G401 (cell line): ENCODE measurements at regions of chr15 and their contacts with region 1.

Region 1: DNA sequence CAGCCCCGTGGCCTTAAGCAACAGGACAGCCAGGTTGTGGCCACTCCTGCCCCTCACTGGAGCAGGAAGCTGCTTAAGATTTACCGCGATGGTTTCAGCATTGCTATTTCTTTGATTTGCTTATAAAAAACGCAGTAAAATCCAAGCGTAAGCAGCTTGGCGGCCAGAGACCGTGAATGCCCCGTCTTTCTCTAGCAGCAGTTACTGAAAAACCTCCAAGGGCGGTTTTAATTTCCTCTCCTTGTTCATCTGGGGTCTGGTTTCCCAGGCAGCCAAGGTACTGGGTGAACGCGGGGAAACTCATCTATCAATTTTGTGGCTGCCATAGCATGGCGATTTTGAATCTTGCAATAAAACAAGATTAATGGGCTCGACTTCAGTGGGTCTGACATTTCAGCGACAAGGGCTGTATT is 130.3 kb downstream of the MINAR1 start:
- DNase-seq: no peak

Region 2: DNA sequence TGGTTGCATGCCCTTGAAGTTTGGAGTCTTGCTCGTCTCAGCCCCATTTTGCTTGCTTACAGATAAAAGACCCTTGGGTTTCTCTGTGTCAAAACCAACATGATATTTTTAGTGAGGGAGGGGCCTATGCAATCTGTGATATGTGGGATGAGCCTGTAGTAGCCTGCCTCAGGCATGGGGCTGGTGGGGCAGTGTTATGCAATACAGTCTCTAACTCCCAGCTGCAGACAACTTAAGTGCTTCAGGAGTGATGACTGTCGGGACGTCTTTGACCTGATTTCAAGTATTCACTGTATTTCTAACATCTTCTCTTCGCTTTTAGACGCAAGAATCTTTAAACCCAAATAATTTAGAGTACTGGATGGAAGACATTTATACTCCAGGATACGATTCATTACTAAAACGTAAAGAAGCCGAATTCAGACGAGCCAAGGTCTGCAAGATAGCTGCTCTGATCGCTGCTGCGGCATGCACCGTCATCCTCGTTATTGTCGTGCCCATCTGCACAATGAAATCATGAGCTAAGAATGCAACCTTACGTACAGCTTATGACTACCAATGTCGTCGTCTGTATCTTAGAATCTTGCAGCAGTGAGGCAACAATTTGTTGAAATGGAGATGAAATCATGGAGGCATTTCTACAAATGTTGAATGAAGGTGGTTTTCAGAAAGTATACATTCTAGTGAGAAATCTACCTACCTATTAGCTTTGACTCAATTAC is 94.4 kb before region 1 on chr15:
- in situ Hi-C with region 1: loop called (anchors 10 kb)
- DNase-seq: no peak

Region 3: DNA sequence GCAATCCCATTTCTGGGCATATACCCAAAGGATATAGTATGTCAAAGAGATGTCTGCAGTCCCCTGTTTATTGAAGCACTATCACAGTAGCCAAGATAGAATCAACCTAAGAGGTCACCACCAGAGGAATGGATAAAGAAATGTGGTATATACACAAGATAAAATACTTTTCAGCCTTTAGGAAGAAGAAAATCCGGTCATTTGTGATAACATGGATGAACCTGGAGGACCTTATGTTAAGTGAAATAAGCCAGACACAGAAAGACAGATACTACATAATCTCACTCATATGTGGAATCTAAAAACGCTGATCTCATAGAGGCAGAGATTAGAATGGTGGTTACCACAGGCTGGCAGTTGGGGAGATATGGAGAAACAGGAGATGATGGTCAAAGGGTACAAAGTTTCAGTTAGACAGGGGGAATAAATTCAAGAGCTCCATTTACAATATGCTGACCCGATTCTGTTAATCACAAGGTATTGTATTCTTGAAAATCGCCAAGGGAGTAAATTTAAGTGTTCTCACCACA is 138.6 kb after region 1 on chr15:
- in situ Hi-C with region 1: no loop called
- DNase-seq: no peak